ENCODE measurements at regions of chr1 and their contacts with region 1.

Region 1: DNA sequence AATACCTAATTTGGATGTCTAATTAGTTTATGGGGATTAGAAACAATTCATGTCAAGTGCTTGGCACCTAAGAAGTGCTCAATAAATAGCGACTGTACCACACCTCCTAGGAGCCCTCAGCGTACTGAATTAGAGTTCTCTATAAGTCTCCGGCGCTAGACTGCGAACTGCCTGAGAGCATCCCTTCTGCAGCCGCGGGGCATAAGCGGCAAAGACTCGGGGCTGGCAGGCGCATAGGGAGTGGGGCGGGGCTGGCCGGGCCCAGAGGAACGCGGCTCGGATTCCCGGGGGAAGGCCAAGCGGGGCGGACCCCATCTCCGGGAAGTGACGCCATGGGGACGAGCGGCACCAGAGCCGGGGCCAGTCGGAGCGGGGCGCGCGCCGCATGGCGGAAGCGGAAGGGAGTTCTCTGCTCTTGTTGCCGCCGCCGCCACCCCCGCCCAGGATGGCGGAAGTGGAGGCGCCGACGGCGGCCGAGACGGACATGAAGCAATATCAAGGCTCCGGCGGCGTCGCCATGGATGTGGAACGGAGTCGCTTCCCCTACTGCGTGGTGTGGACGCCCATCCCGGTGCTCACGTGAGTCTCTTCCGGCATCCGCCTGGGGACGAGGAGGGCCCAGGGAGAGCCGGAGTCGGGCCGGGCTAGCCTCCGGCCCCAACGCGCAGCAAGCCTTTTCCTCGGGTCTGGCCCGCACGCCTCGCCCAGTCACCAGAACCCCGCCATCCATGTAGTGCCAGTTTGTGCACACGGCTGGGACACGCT is at the start of gene TMEM222:
- DNase-seq: peak; percentile 99
- ATAC-seq: peak; percentile 98
- H3K4me3 Mint-ChIP-seq: peak within 1 kb of the TSS; percentile 94
- H3K27ac Mint-ChIP-seq: peak within 1 kb of the TSS; percentile 90
- H3K4me1 Mint-ChIP-seq: peaks cover 41% of the 10 kb centered on the region
- H3K27me3 Mint-ChIP-seq: no peaks in the 10 kb centered on the region
- total RNA-seq, gene TMEM222: 27.5 to 31.2 TPM

Region 2: GRCh38 chr1:27332536-27333281 is 10.7 kb after region 1 on chr1:
- CTCF ChIA-PET with region 1: interaction called, 23 read pairs
- POLR2A ChIA-PET with region 1: no interaction called
- intact Hi-C with region 1: no loop called
- DNase-seq: peak; percentile 72
- ATAC-seq: peak; percentile 91
- H3K4me3 Mint-ChIP-seq: no peak overlapping the region
- H3K27ac Mint-ChIP-seq: no peak overlapping the region
- H3K4me1 Mint-ChIP-seq: peaks cover 27% of the 10 kb centered on the region
- H3K27me3 Mint-ChIP-seq: no peaks in the 10 kb centered on the region

Region 3: DNA sequence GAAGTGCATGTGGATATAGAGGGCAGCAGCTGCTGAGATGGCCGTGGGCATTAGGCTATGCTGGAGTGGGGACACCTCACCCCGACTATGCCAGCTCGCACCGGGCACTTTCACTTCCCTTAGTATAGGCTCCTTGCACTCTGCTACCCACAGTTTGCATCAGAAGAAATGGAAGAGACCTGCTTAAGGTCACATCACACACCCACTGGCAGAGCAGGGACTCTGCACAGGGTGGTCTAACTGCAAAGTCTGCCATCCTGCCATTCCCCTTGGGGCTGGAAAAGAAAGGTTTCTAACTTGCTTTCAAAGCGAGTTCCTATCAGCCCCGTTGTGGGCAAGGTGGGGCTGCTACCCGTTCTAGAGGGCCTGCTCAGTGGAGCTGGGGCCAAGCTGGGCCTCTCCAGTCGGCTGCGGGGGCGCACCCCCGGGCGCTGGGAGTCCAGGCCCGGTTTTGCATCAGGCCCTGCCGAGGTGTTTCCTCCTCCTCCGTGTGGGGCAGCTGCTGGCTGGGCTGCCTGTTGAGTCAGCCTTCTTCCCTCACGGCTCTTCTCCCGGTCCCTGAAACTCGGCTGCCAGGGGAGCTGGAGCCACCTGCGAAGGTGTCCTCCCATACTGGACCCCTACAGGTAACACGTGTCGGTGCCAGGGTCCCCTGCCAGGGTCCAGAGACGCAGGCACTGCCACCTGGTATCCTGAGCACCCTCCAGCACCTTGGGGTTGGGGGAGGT is 19.7 kb after region 1 on chr1 and contains the start of gene SYTL1:
- CTCF ChIA-PET with region 1: interaction called, 4 read pairs
- POLR2A ChIA-PET with region 1: interaction called, 9 read pairs
- intact Hi-C with region 1: loop called (anchors 1 to 2 kb)
- DNase-seq: peak; percentile 83
- ATAC-seq: peak; percentile 63
- H3K4me3 Mint-ChIP-seq: peak within 1 kb of the TSS; percentile 78
- H3K27ac Mint-ChIP-seq: peak within 1 kb of the TSS; percentile 86
- H3K4me1 Mint-ChIP-seq: peaks cover 51% of the 10 kb centered on the region
- H3K27me3 Mint-ChIP-seq: no peaks in the 10 kb centered on the region
- total RNA-seq, gene SYTL1: 21.4 to 26.1 TPM

Region 4: DNA sequence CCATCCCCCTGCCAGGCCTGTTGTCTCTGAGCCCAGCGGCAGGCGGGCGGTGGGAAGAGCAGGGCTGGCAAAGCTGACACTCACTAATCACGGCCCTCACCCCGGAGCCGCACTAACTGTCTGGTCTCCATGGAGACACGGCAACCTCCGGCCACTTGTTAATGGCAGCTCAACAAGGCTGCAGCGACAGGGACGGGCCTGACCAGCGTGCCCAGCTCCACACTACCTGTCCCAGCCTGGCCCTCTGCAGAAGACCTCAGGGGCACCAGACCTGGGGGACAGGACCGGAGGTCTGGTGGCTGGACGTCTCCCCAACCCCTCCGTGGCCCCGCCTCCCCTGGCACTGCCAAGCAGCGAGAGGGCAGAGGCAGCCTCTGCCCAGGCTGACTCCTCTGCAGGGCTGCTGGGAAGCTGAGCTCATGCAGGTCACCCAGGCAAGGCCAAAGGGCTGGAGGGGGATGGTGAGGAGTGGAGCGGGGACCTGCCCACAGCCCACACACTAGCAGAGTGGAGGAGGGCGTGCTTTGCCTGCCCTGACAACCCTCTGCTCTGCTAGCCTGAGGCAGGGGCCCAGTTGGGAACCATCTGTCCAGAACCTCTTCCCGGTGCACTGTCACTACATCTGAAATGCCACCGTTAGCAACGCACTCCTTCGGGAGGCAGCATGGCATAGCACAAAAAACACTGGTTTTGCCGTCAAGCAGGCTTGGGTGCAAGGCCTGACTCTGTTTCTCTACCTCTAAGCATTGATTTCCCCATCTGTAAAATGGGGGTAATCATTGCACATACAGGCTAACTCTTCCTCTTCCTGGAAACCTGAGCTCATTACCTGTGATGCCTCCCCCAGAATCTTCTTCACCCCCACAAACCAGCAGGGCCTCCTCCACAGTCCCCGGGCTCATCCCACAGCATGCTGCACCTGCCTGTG is 197.6 kb after region 1 on chr1:
- CTCF ChIA-PET with region 1: no interaction called
- POLR2A ChIA-PET with region 1: no interaction called
- intact Hi-C with region 1: no loop called
- DNase-seq: no peak
- ATAC-seq: no peak
- H3K4me3 Mint-ChIP-seq: no peak overlapping the region
- H3K27ac Mint-ChIP-seq: no peak overlapping the region
- H3K4me1 Mint-ChIP-seq: peaks cover 55% of the 10 kb centered on the region
- H3K27me3 Mint-ChIP-seq: no peaks in the 10 kb centered on the region

Measured in activated CD4-positive, alpha-beta T cell treated with anti-CD3 and anti-CD28 coated beads for 36 hours (primary cell).